Activated CD4-positive, alpha-beta T cell treated with anti-CD3 and anti-CD28 coated beads, Interleukin-2, amount 10 ng/mL, durations not matched to agents 24 days and 14 days (primary cell): ENCODE measurements at regions of chr2 and their contacts with region 1.

Region 1: GRCh38 chr2:27211829-27212627 is at the starts of genes ATRAID and SLC5A6:
- DNase-seq: peak; percentile 97
- H3K4me3 Mint-ChIP-seq: peak within 1 kb of the TSS; percentile 91
- H3K27ac Mint-ChIP-seq: peak within 1 kb of the TSS; percentile 99
- H3K4me1 Mint-ChIP-seq: peaks cover 40% of the 10 kb centered on the region
- H3K27me3 Mint-ChIP-seq: no peaks in the 10 kb centered on the region
- total RNA-seq, gene ATRAID: 109 and 120 TPM in 2 replicates
- total RNA-seq, gene SLC5A6: 87.1 and 97.9 TPM in 2 replicates

Region 2: DNA sequence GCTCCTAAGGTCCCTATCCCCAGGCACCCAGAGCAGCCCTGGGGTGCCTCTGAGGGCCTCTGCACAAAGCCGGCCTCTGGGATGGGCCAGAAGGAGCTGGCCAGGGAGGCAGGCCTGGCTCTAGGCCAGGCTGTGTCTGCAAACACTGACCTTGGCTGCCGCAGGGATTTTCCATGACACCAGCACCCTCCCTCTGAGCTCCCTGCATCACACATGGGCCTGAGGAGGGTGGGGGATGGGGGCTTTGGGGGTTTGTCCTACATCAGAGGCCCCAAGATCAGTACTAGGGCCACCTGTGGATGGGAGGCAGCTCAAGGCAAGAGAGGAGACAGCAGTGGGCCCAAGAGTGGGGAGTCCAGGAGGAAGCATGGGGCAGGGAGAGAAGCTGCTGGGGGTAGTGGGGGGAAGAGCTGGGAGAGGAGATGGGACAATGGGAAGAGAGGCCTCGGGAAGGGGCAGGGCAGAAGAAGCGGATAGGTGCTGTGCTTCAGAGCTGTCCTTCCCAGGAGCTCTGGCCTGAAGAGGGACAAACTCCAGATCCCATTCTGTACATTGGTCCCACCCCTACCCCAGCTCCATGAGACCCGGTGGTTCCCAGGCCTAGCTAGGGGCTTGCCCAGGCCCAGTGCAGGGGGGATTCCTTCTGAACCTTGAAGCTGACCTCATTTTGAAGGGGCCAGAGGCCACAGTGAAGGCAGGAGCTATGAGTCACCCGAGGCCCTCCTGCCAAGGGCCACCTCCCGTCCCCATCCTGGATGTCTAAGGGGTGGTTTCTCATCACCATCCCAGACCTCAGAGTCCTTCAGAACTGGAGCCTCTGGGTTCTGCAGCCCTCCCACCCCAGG is 491.5 kb before region 1 on chr2:
- intact Hi-C with region 1: no loop called
- DNase-seq: no peak
- H3K4me3 Mint-ChIP-seq: no peak overlapping the region
- H3K27ac Mint-ChIP-seq: no peak overlapping the region
- H3K4me1 Mint-ChIP-seq: no peaks in the 10 kb centered on the region
- H3K27me3 Mint-ChIP-seq: no peaks in the 10 kb centered on the region

Region 3: GRCh38 chr2:26785431-26786206 is 426.4 kb before region 1 on chr2 and contains the start of gene CENPA:
- intact Hi-C with region 1: loop called (anchors 5 kb)
- DNase-seq: peak; percentile 98
- H3K4me3 Mint-ChIP-seq: peak within 1 kb of the TSS; percentile 90
- H3K27ac Mint-ChIP-seq: peak within 1 kb of the TSS; percentile 85
- H3K4me1 Mint-ChIP-seq: peaks cover 31% of the 10 kb centered on the region
- H3K27me3 Mint-ChIP-seq: no peaks in the 10 kb centered on the region
- total RNA-seq, gene CENPA: 21.8 and 23.6 TPM in 2 replicates

Region 4: DNA sequence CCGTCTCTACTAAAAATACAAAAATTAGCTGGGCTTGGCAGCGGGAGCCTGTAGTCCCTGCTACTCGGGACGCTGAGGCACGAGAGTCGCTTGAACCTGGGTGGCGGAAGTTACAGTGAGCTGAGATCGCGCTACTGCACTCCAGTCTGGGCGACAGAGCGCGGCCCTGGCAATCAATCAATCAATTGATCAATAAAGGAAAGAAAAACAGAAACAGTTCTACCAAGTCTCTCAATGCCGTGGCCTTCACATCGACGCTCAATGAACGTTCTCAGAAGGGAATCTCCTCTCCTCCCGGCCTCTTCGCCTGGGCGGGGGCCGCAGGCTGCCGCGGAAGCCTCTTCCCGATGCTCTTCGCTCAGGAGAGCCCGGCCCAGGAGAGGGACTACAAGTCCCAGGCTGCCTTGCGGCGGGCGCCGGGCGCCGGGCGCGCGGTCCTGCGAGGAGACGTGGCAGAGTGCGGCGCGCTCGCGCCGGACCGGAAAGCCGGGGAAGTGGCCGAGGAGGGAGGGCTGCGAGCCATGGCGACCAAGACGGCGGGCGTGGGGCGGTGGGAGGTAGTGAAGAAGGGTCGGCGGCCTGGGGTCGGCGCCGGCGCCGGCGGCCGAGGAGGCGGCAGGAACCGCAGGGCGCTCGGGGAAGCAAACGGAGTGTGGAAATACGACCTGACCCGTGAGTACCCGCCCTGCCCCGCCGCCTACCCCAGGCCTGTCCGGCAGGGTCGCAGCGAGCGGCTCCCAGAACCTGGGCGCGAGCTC is 179.4 kb before region 1 on chr2 and contains the start of gene TMEM214:
- intact Hi-C with region 1: loop called (anchors 5 kb)
- DNase-seq: peak; percentile 96
- H3K4me3 Mint-ChIP-seq: peak within 1 kb of the TSS; percentile 94
- H3K27ac Mint-ChIP-seq: peak within 1 kb of the TSS; percentile 89
- H3K4me1 Mint-ChIP-seq: peaks cover 45% of the 10 kb centered on the region
- H3K27me3 Mint-ChIP-seq: no peaks in the 10 kb centered on the region
- total RNA-seq, gene TMEM214: 93.4 and 98.6 TPM in 2 replicates

Region 5: GRCh38 chr2:27050281-27050995 is 161.6 kb before region 1 on chr2:
- intact Hi-C with region 1: loop called (anchors 1 kb)
- DNase-seq: peak; percentile 98
- H3K4me3 Mint-ChIP-seq: peak overlapping the region; percentile 90
- H3K27ac Mint-ChIP-seq: peak overlapping the region; percentile 99
- H3K4me1 Mint-ChIP-seq: peaks cover 22% of the 10 kb centered on the region
- H3K27me3 Mint-ChIP-seq: peaks cover 5% of the 10 kb centered on the region

Region 6: GRCh38 chr2:27086090-27086723 is 125.8 kb before region 1 on chr2:
- intact Hi-C with region 1: loop called (anchors 5 kb)
- DNase-seq: peak; percentile 100
- H3K4me3 Mint-ChIP-seq: peak overlapping the region; percentile 90
- H3K27ac Mint-ChIP-seq: peak overlapping the region; percentile 91
- H3K4me1 Mint-ChIP-seq: peaks cover 30% of the 10 kb centered on the region
- H3K27me3 Mint-ChIP-seq: no peaks in the 10 kb centered on the region

Region 7: DNA sequence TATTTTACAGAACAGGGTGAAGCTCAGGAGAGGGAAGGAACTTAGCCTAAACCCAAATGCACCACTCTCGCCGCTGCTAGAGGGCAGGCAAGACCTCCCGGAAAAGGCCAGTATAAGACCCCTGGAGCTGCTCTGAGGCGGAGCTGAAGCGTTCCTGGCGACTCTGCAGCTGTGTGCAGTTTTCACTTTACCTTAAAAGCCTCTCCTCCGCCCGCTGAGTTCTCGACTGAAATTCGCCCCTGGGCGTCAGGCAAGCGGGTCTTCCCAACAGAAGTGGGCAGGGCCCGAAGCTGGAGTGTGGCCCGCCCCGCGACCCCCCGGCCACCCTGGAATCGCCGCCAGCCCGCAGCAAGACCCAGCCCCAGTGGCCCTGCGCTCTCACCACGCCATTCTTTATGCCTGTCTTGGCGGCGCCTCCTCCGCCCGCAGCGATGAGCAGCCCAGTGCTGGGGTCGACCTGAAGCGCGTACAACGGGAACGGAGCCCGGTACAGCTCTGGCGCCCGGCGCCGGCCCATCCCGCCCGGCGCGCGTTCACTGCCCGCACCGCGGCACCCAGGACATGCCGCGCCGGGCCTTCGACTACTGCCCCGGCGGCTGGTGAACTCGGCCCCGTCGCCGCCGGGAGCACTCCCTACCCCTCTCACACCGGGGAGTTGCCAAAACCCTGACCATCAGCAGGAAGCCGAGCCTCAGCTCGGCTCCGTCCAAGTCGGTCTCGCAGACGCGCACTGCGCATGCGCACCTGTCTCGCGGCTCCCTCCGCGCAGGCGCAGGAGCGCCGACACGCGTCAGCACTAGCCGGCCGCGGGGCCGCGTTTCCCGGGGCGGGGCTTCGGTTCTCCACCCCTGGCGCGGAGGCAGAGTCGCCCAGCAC is 77.9 kb before region 1 on chr2 and contains the start of gene PREB:
- intact Hi-C with region 1: loop called (anchors 1 kb)
- DNase-seq: peak; percentile 100
- H3K4me3 Mint-ChIP-seq: peak within 1 kb of the TSS; percentile 93
- H3K27ac Mint-ChIP-seq: peak within 1 kb of the TSS; percentile 98
- H3K4me1 Mint-ChIP-seq: peaks cover 16% of the 10 kb centered on the region
- H3K27me3 Mint-ChIP-seq: no peaks in the 10 kb centered on the region
- total RNA-seq, gene PREB: 85.4 and 88.3 TPM in 2 replicates

Region 8: GRCh38 chr2:27264753-27265535 is 52.9 kb after region 1 on chr2:
- intact Hi-C with region 1: loop called (anchors 2 kb)
- DNase-seq: peak; percentile 83
- H3K4me3 Mint-ChIP-seq: peak overlapping the region; percentile 74
- H3K27ac Mint-ChIP-seq: no peak overlapping the region
- H3K4me1 Mint-ChIP-seq: peaks cover 25% of the 10 kb centered on the region
- H3K27me3 Mint-ChIP-seq: peaks cover 44% of the 10 kb centered on the region